Activated CD8-positive, alpha-beta T cell treated with anti-CD3 and anti-CD28 coated beads for 36 hours (primary cell): ENCODE measurements at regions of chr16 and their contacts with region 1.

Region 1: GRCh38 chr16:2770057-2770951 is 6.8 kb downstream of the ELOB start:
- DNase-seq: no peak
- ATAC-seq: peak; percentile 28
- H3K4me3 Mint-ChIP-seq: no peak overlapping the region
- H3K27ac Mint-ChIP-seq: no peak overlapping the region
- H3K4me1 Mint-ChIP-seq: peaks cover 8% of the 10 kb centered on the region
- H3K27me3 Mint-ChIP-seq: no peaks in the 10 kb centered on the region
- CTCF ChIP-seq: no peak

Region 2: DNA sequence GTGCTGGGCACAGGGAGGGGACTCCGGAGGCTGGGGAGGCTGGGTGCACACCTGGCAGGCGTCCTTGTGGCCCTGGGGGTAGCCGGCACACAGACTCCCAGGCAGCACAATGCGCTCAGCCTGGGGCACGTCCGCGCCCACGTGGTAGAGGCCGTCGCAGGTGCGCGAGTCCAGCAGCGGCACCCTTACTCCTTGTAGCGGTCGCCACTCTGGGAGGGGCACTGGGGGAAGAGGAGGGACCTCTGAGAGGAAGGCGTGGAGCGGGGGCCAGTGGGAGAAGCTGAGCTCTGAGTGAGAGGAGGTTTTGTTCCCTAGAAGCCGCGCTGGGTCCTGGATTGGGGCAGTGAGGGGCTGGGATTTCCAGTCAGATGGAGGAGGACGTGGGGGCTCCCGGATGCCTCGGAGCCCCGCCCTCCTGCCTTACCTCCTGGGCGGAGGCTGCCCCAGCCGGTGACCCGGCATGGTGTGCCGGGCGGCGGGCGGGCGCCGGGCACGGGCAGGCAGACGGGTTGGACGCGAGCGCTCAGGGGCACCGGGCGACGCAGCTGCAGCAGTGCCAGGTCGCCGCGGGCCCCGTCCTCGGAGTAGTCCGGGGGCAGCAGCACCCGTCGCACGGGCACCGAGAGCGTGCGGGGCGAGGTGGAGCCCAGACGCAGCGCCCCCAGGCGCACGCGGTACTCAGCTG is 14.8 kb after region 1 on chr16:
- CTCF ChIA-PET with region 1: interaction called, 7 read pairs
- POLR2A ChIA-PET with region 1: interaction called, 20 read pairs
- intact Hi-C with region 1: no loop called
- DNase-seq: peak; percentile 61
- ATAC-seq: peak; percentile 65
- H3K4me3 Mint-ChIP-seq: peak overlapping the region; percentile 84
- H3K27ac Mint-ChIP-seq: peak overlapping the region; percentile 87
- H3K4me1 Mint-ChIP-seq: peaks cover 11% of the 10 kb centered on the region
- H3K27me3 Mint-ChIP-seq: peaks cover 2% of the 10 kb centered on the region
- CTCF ChIP-seq: no peak